Activated CD4-positive, alpha-beta memory T cell treated with anti-CD3 and anti-CD28 coated beads for 36 hours (primary cell): ENCODE measurements at regions of chr12 and their contacts with region 1.

Region 1: DNA sequence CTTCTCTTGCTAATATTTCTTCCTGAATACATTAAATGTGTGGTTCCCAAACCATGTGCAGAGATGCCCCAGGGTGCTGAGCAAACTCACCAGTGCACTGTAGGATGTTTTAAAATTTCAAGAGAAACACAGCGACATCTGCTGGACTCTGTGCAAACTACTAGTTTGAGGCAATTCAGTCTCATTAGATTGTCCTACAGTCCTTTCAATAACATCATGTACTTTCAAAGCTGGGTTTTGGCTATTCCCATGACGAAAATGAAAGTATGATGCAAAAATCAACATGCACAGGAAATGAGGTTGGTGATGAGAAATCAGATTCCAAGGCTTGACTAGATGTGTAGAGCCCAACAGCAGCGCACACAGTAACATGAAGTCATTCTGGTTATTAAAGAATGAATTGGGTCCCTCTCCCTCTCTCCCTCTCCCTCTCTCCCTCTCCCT is 66.3 kb downstream of the CLIP1 start:
- DNase-seq: peak; percentile 62
- H3K4me3 Mint-ChIP-seq: no peak overlapping the region
- H3K27ac Mint-ChIP-seq: peak overlapping the region; percentile 43
- H3K4me1 Mint-ChIP-seq: peaks cover 9% of the 10 kb centered on the region
- H3K27me3 Mint-ChIP-seq: no peaks in the 10 kb centered on the region

Region 2: GRCh38 chr12:122130150-122130549 is 226.1 kb before region 1 on chr12:
- CTCF ChIA-PET with region 1: interaction called, 3 read pairs
- POLR2A ChIA-PET with region 1: no interaction called
- intact Hi-C with region 1: loop called (anchors 5 kb)
- DNase-seq: no peak
- H3K4me3 Mint-ChIP-seq: no peak overlapping the region
- H3K27ac Mint-ChIP-seq: no peak overlapping the region
- H3K4me1 Mint-ChIP-seq: peaks cover 2% of the 10 kb centered on the region
- H3K27me3 Mint-ChIP-seq: no peaks in the 10 kb centered on the region

Region 3: GRCh38 chr12:122336015-122336946 is 19.9 kb before region 1 on chr12:
- CTCF ChIA-PET with region 1: interaction called, 50 read pairs
- POLR2A ChIA-PET with region 1: no interaction called
- intact Hi-C with region 1: loop called (anchors 2 kb)
- DNase-seq: peak; percentile 60
- H3K4me3 Mint-ChIP-seq: no peak overlapping the region
- H3K27ac Mint-ChIP-seq: peak overlapping the region; percentile 40
- H3K4me1 Mint-ChIP-seq: peaks cover 12% of the 10 kb centered on the region
- H3K27me3 Mint-ChIP-seq: no peaks in the 10 kb centered on the region

Region 4: GRCh38 chr12:122381021-122381420 is 24.8 kb after region 1 on chr12:
- CTCF ChIA-PET with region 1: interaction called, 11 read pairs
- POLR2A ChIA-PET with region 1: no interaction called
- intact Hi-C with region 1: no loop called
- DNase-seq: no peak
- H3K4me3 Mint-ChIP-seq: no peak overlapping the region
- H3K27ac Mint-ChIP-seq: no peak overlapping the region
- H3K4me1 Mint-ChIP-seq: peaks cover 4% of the 10 kb centered on the region
- H3K27me3 Mint-ChIP-seq: no peaks in the 10 kb centered on the region